Heart left ventricle (tissue), 16 donors: ENCODE measurements at regions of chr1 and their contacts with region 1.

Region 1: DNA sequence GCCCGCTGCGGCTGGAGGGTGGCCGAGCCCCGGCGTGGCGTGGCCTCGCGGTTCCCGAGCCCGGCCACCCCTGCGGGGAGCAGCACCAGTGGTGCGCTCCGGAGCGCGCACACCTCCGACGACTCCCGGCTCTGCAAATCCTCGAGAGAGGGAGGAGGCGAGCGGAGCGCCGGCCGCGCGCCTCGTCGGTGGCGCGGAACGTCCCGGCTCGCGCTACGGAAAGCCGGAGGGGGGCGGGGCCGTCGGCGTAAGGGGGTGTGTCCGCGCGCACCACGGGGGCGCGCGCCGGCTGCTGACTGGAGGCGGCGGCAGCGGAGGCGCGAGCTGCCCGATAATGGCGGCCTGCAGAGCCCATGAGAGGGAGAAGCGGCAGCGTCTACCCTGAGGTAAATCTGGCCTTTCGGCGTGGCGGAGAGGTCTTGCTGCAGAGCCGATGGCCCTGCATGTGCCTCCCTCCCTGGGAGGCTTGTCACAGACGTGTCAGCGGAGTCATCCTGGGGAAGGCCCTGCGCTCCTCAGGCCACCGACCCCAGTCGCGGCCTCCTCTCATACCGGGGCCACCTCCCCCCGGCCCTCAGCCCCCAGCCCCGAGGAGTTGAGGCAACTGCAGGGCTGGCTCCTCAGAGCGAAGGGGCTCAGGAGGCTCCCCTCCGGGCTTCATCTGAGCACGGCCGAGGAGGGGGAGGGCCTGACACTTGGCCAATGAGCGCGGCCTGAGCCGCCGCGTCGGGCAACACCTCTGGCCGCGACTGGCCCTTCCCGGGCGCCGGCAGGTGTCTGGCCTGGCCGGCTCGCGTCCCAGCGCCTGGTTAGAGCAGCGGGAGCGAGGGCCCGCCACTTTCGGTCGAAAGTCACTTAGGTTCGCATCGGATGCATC is at the start of gene PDIK1L:
- DNase-seq: peak; percentile 95 to 97 (median 96)
- ATAC-seq: peak; percentile 84 to 94 (median 92)
- H3K4me3 ChIP-seq: peak within 1 kb of the TSS; percentile 61 to 99 (median 96)
- H3K27ac ChIP-seq: peak within 1 kb of the TSS; percentile 86 to 99 (median 97)
- H3K4me1 ChIP-seq: peaks cover 0 to 40% (median 30%) of the 10 kb centered on the region in 12 donors
- H3K27me3 ChIP-seq: no peaks in the 10 kb centered on the region
- CTCF ChIP-seq: peak in 2 of 12 donors; percentile 13 to 18
- POLR2A ChIP-seq: peak in 1 of 2 donors; percentile 73
- total RNA-seq, gene PDIK1L: 3.9 to 9.3 (median 6.0) TPM

Region 2: GRCh38 chr1:26035959-26036755 is 75.6 kb before region 1 on chr1:
- intact Hi-C with region 1: no loop called
- DNase-seq: peak; percentile 83 to 93 (median 89)
- ATAC-seq: peak; percentile 79 to 88 (median 82)
- H3K4me3 ChIP-seq: peak overlapping the region; percentile 66 to 97 (median 75)
- H3K27ac ChIP-seq: peak overlapping the region; percentile 60 to 97 (median 92)
- H3K4me1 ChIP-seq: peaks cover 0 to 36% (median 10%) of the 10 kb centered on the region in 12 donors
- H3K27me3 ChIP-seq: peaks cover 0 to 7% (median 0%) of the 10 kb centered on the region in 9 donors
- CTCF ChIP-seq: peak; percentile 98 to 100 (median 99)
- POLR2A ChIP-seq: no peak

Region 3: DNA sequence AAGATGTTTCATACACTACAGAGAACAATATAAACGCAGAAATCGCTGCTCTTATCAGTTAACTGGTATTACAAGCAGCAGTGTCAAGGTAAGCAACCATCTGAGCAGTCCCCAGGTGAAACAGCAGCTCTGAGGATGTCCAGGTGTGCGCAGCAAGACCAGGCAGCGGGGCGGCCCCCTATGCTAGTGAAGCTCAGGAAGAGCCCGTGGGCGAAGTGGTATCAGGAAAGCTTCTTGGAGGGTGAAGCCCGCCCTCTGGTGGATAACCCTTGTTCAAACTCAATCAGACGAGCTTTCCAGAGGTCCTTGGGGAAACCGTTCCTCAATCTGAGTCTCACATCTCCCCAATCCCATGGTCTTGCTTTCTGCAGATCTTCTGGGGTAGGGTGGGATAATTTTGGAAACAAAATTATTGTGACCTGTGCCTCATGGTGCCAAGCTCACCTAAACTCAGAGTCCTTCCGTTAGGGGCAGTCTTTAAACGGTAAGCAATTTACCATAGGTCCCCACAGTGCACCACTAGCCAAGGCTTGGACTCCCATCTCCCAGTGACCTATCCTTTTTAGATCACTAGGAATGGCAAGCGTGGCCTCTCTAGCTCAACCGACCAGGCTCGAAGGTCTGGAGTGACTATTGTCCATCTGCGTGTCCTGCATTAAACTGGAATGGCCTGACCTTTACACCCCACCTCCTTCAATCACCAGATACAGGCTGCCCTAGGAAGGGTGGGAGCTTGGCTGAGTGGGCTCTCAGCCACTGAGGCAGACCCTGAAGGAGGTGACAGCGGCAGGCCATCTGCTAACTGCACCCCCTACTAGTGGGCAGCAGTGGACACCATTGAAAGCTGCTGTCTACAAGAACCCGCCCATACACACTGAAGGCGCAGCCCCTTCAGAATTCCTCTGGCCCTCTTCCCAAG is 33.5 kb after region 1 on chr1:
- intact Hi-C with region 1: loop called in 1 of 10 experiments (anchors 5 kb)
- DNase-seq: peak; percentile 77 to 83 (median 80)
- ATAC-seq: peak; percentile 82 to 96 (median 94)
- H3K4me3 ChIP-seq: no peak overlapping the region
- H3K27ac ChIP-seq: no peak overlapping the region
- H3K4me1 ChIP-seq: peaks cover 0 to 10% (median 0%) of the 10 kb centered on the region in 12 donors
- H3K27me3 ChIP-seq: no peaks in the 10 kb centered on the region
- CTCF ChIP-seq: peak; percentile 71 to 89 (median 80)
- POLR2A ChIP-seq: no peak

Region 4: DNA sequence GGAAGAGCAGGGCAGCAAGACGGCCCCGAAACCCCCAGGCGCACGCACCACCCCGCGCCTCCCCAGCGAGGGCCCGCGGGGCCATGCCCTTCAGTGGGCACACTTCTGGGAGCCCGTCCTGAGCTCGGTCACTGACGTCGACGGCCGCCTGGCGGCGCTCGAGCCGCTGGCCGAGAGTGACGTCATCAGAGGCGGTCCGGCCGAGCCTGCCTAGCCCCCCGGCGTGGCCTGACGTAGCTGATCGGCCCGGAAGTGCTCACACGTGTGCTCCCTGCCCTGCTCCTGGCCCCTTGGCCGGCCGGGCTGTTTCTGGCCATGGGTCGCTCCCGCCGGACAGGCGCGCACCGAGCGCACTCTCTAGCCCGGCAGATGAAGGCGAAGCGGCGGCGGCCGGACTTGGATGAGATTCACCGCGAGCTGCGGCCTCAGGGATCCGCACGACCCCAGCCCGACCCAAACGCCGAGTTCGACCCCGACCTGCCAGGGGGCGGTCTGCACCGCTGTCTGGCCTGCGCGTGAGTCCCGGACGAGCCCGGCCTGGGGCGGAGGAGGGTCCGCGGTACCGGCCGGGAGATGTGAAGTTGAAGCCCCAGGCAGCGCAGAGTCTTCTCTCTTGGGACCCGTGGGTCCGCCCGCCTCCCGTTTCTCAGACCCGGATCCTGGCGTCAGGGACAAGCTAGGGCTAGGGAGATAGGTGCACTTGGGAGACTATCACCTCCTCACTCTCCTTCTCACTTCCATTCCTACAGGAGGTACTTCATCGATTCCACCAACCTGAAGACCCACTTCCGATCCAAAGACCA is 58.1 kb after region 1 on chr1 and contains the start of gene ZNF593:
- intact Hi-C with region 1: loop called in 2 of 10 experiments (anchors 2 to 5 kb)
- DNase-seq: peak; percentile 93 to 97 (median 95)
- ATAC-seq: peak; percentile 92 to 98 (median 96)
- H3K4me3 ChIP-seq: peak within 1 kb of the TSS; percentile 66 to 94 (median 86)
- H3K27ac ChIP-seq: peak within 1 kb of the TSS; percentile 34 to 89 (median 81)
- H3K4me1 ChIP-seq: peaks cover 5 to 26% (median 16%) of the 10 kb centered on the region in 12 donors
- H3K27me3 ChIP-seq: no peaks in the 10 kb centered on the region
- CTCF ChIP-seq: peak; percentile 81 to 98 (median 91)
- POLR2A ChIP-seq: peak in 1 of 2 donors; percentile 59
- total RNA-seq, gene ZNF593: 13.7 to 36.8 (median 21.0) TPM

Region 5: DNA sequence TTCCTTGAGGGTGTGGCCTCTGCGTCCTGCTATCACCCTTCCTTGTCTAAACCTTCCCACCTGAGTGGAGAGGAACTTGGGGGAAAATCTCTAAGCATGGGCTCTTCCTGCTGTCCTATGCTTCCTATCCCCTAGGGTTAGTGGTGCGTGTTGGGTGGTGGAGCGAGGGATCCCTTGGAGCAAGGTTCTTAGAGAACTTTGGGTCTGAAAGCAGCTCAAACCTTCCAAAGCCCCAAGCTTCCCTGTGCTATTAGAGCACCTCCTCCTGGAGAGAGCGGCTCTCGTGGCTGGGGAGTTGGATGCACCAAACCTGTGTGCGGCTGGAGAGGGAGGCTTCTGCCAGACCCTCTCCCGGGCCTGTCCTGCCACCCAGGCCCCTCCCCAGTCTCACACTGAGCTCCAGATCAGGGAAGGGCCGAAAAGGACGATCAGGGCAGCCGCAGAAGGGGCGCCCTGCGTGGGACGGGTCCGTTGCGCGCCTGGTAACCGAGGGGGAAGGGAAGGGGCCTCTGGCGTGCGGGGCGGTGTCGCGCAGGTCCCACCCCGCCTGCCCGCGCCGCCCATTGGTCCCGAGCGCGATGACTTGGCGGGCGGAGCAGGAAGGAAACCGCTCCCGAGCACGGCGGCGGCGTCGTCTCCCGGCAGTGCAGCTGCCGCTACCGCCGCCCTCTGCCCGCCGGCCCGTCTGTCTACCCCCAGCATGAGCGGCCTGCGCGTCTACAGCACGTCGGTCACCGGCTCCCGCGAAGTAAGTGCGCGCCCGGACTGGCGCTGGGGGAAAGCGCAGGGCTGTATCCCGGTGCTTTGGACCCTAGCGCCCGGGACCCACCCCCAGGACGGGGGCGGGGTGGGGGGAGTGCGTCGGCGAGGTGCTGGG is 167.9 kb after region 1 on chr1 and contains the start of gene SH3BGRL3:
- intact Hi-C with region 1: loop called in 1 of 10 experiments (anchors 5 kb)
- DNase-seq: peak; percentile 92 to 94 (median 92)
- ATAC-seq: peak; percentile 51 to 85 (median 80)
- H3K4me3 ChIP-seq: peak within 1 kb of the TSS; percentile 56 to 99 (median 74)
- H3K27ac ChIP-seq: peak within 1 kb of the TSS; percentile 60 to 98 (median 92)
- H3K4me1 ChIP-seq: peaks cover 8 to 93% (median 70%) of the 10 kb centered on the region in 12 donors
- H3K27me3 ChIP-seq: no peaks in the 10 kb centered on the region
- CTCF ChIP-seq: peak in 10 of 12 donors; percentile 19 to 67 (median 33)
- POLR2A ChIP-seq: peak; percentile 32 to 94
- total RNA-seq, gene SH3BGRL3: 22.4 to 234 (median 40.0) TPM

Region 6: DNA sequence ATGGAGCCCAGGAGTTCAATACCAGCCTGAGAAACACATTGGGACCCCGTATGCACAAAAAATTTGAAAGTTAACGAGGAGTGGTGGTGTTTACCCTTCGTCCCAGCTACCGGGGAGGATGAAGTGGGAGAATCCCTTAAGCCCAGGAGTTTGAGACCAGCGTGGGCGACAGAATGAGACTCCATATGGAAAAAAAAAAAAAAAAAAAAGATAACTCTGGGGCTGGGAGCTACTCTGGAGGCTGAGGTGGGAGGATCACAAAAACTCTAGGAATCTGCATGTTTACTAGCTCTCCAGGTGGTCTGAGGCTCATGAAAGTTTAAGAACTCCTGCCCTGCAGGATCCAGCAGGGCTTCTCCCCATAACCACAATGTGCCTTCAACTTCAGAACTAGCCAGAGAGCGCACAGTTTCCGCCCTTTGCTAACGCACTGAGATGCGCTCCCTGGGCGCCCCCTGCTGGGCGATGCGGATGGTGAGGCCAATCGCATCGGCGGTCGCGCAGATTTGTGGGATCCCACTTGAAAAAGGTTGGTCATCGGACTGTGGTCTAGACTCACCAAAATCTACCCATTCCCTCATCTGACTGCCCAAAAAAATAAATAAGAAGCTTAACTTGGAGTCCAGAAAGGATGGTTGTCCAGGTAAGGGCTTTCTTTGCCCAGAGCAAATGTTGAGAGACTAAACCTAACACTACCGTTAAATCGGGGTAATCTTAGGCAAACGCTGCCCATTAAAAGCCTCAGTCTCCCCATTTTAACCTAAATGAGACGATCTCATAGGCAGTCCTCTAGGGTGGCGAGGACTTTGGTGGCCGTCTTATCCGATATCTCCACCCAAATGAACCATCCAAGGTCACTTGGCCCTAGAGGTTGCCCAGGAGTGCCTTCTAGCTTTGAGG is 252.0 kb after region 1 on chr1:
- intact Hi-C with region 1: loop called in 1 of 10 experiments (anchors 5 kb)
- DNase-seq: peak; percentile 70 to 89 (median 78)
- ATAC-seq: peak; percentile 50 to 80 (median 71)
- H3K4me3 ChIP-seq: no peak overlapping the region
- H3K27ac ChIP-seq: no peak overlapping the region
- H3K4me1 ChIP-seq: peaks cover 0 to 19% (median 8%) of the 10 kb centered on the region in 12 donors
- H3K27me3 ChIP-seq: peaks cover 17 to 57% (median 28%) of the 10 kb centered on the region in 9 donors
- CTCF ChIP-seq: peak; percentile 65 to 94 (median 86)
- POLR2A ChIP-seq: no peak